ENCODE measurements at regions of chr20 and their contacts with region 1.

Region 1: DNA sequence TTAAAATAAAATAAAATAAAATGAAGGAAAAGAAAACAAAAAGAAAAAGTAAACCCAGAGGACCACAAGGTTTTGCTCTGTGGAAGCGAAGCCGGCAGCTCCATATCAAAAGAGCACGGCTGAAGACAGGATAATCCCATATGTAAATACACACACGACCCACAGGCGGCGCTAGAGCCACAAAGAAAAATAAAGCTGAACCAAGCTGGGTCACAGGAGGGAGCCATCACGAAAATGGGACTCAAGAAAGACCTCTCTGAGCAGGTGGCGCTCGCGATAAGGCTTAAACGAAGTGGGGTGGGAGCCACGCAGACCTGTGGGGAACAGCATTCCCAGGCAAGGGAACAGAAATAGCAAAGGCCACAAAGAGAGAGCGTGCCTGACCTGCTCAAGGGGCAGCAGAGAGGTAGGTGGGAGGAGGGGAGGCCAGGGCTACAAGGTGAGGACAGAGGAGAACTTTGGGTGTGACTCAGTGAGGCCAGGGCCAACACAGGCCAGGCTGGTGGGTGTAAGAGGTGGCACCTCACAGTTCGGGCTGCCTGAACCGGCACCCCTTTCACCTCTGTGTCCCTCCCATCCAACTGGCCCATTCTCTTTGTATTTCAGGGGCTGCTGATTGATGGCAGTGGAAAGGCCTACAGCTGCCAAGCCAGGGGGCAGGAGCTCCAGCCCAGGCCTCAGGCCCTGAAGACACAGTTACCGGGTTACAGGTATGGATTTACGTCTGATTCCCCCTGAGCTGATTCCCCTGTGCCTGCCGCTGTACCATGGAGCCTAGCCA is 26.0 kb downstream of the PTGIS start:
- DNase-seq: peak; percentile 40
- H3K4me3 ChIP-seq: no peak overlapping the region
- H3K27ac ChIP-seq: no peak overlapping the region
- H3K4me1 ChIP-seq: no peaks in the 10 kb centered on the region
- H3K27me3 ChIP-seq: no peaks in the 10 kb centered on the region
- CTCF ChIP-seq: peak; percentile 71 to 93 (median 91)
- POLR2A ChIP-seq: no peak

Region 2: DNA sequence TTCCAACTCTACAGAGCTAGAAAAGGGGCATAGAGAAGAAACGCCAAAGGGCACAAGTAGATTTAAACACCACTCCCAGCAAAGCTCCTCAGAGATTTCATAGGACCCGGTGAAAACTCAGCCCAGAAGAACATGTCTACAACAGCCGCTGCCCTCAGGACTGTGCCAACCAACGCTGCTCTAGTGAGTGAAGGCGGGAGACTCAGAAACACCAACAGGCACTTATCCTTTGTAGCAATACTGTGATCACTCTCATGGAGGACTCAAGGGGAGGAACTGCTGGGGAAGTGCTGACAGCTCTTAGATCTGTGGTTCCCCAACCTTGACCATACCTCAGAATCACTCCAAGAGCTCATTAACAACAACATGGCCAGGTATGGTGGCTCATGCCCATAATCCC is 393.3 kb before region 1 on chr20:
- intact Hi-C with region 1: no loop called
- DNase-seq: no peak
- H3K4me3 ChIP-seq: no peak overlapping the region
- H3K27ac ChIP-seq: no peak overlapping the region
- H3K4me1 ChIP-seq: no peaks in the 10 kb centered on the region
- H3K27me3 ChIP-seq: no peaks in the 10 kb centered on the region
- CTCF ChIP-seq: no peak
- POLR2A ChIP-seq: no peak

Region 3: GRCh38 chr20:49846206-49846807 is 304.4 kb after region 1 on chr20:
- intact Hi-C with region 1: loop called (anchors 5 kb)
- DNase-seq: peak; percentile 63
- H3K4me3 ChIP-seq: no peak overlapping the region
- H3K27ac ChIP-seq: no peak overlapping the region
- H3K4me1 ChIP-seq: peaks cover 5% of the 10 kb centered on the region
- H3K27me3 ChIP-seq: no peaks in the 10 kb centered on the region
- CTCF ChIP-seq: peak; percentile 48 to 76 (median 70)
- POLR2A ChIP-seq: no peak

Region 4: DNA sequence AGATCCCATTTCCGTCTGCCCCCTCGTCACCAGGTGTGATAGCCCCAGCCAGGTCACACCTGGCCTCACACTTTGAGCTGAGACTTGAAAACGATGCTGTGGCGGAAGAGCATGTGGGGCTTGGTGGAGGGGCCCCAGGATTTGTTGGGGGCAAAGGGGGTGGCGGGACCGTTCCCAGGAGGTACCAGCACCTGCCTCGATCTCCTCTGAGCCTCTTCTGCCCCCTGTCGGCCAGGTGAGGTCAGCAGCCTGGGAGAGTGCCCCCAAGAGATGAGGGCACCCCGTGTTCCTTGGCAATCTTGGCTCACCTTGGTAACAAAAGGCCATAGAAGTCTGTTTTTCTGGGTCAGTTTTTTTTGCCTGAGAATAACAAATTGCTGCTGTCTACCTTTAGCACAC is 348.0 kb after region 1 on chr20:
- intact Hi-C with region 1: loop called (anchors 10 kb)
- DNase-seq: no peak
- H3K4me3 ChIP-seq: no peak overlapping the region
- H3K27ac ChIP-seq: peak overlapping the region in 1 of 2 donors; percentile 88
- H3K4me1 ChIP-seq: peaks cover 16% of the 10 kb centered on the region
- H3K27me3 ChIP-seq: no peaks in the 10 kb centered on the region
- CTCF ChIP-seq: peak in 2 of 4 experiments; percentile 16 to 45
- POLR2A ChIP-seq: no peak

Region 5: DNA sequence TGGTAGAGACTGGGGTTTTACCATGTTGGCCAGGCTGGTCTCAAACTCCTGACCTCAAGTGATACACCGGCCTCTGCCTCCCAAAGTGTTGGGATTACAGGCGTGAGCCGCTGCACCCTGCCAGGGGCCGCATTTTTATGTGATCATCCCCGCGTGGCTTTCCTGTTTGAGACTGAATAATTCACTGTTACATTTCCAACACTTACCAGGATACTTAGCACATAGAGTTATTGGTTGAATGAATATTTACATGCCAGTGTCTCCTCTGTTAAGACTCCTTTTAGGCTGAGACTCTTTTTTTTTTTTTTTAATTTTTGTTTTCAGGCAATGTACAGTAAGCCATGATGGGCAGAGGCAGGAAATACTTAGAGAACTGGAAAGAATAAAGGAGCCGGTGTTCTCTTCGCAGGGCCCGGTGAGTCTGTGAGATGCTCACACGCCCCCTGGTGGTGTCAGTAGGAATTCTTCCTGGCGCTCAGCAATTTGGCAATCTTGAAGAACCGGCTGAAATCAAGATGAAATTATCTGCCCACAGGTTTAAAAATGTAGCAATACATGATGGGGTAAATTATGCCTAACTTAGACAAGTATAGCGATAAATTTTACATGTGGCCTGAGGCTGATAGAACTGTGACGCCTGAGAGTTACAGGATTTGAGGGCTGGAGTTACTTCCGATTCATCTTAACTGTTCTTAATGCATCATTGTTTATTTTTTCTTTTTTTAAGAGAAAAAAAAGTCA is 386.6 kb after region 1 on chr20:
- intact Hi-C with region 1: loop called (anchors 5 kb)
- DNase-seq: peak; percentile 81
- H3K4me3 ChIP-seq: no peak overlapping the region
- H3K27ac ChIP-seq: peak overlapping the region in 1 of 2 donors; percentile 8
- H3K4me1 ChIP-seq: no peaks in the 10 kb centered on the region
- H3K27me3 ChIP-seq: no peaks in the 10 kb centered on the region
- CTCF ChIP-seq: peak; percentile 85 to 94 (median 92)
- POLR2A ChIP-seq: no peak

Measured in prostate gland (tissue), 2 donors.